ENCODE measurements at regions of chr15 and their contacts with region 1.

Region 1: DNA sequence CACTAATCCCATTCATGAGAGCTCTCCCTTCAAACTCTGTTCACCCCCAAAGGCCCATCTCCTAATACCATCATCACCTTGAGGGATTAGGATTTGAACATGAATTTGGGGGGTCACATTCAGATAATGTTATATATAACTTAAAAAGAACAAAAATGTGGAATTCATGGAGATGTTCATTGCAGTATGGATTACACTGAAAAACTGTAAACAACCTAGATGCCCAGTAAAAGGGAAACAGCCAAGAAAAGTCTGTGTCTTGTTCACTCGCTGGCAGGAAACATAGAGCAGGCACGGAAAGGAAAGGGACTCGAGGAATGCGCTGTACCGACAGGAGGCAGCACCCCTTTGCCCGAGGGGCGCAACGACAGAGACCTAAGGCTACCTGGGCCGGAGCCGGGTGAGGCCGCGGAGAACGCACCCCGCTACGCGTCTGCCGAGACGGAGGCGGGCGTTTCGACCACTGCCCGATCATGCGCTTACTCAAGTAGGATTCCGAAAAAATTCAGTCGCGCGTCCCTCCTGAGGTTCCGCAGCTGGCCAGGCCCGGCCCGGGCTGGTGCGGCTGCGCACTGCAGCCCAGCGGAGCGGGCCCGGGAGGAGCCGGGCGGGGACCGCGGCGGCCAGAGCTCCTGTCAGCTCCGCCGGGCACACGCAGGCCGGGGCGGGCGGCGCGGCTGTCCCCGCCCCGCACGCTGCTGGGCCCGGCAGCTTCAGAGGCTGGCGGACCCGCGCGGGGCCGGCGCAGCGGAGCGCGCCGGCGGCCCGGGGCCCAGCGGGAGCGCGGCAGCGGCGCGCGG is 862 bp upstream of the MAN2A2 start:
- DNase-seq: peak; percentile 82
- H3K4me3 Mint-ChIP-seq: peak overlapping the region; percentile 83
- H3K27ac Mint-ChIP-seq: peak overlapping the region; percentile 88
- H3K4me1 Mint-ChIP-seq: peaks cover 25% of the 10 kb centered on the region
- H3K27me3 Mint-ChIP-seq: no peaks in the 10 kb centered on the region

Region 2: GRCh38 chr15:90862964-90863778 is 39.1 kb before region 1 on chr15:
- CTCF ChIA-PET with region 1: no interaction called
- POLR2A ChIA-PET with region 1: no interaction called
- intact Hi-C with region 1: no loop called
- DNase-seq: no peak
- H3K4me3 Mint-ChIP-seq: no peak overlapping the region
- H3K27ac Mint-ChIP-seq: peak overlapping the region; percentile 87
- H3K4me1 Mint-ChIP-seq: peaks cover 40% of the 10 kb centered on the region
- H3K27me3 Mint-ChIP-seq: no peaks in the 10 kb centered on the region

Region 3: GRCh38 chr15:90924375-90924774 is 22.1 kb after region 1 on chr15:
- CTCF ChIA-PET with region 1: interaction called, 231 read pairs
- POLR2A ChIA-PET with region 1: interaction called, 82 read pairs
- intact Hi-C with region 1: loop called (anchors 1 kb)
- DNase-seq: peak; percentile 61
- H3K4me3 Mint-ChIP-seq: no peak overlapping the region
- H3K27ac Mint-ChIP-seq: peak overlapping the region; percentile 62
- H3K4me1 Mint-ChIP-seq: peaks cover 35% of the 10 kb centered on the region
- H3K27me3 Mint-ChIP-seq: no peaks in the 10 kb centered on the region

Region 4: DNA sequence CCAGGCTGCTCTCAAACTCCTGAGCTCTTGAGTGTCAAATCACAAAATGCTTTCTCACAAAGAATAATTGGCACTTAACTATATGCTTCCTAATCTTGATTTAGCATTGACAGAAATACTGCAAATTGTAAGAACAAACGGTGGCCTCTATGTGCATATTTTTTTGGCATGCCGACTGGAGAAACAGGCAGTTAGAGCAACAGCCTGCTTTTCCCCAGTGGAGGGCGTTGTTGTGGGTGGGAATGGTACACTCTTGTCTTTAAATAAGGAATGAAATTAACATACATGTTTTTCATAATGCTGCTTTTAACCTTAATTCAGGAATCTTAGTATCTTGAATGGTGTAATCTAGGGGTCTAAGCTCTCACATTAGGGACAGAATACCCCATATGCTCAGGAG is 166.7 kb after region 1 on chr15:
- CTCF ChIA-PET with region 1: no interaction called
- POLR2A ChIA-PET with region 1: no interaction called
- intact Hi-C with region 1: no loop called
- DNase-seq: no peak
- H3K4me3 Mint-ChIP-seq: no peak overlapping the region
- H3K27ac Mint-ChIP-seq: no peak overlapping the region
- H3K4me1 Mint-ChIP-seq: no peaks in the 10 kb centered on the region
- H3K27me3 Mint-ChIP-seq: peaks cover 7% of the 10 kb centered on the region

Measured in activated CD4-positive, alpha-beta memory T cell treated with anti-CD3 and anti-CD28 coated beads for 36 hours (primary cell).